ENCODE measurements at regions of chr12 and their contacts with region 1.

Region 1: DNA sequence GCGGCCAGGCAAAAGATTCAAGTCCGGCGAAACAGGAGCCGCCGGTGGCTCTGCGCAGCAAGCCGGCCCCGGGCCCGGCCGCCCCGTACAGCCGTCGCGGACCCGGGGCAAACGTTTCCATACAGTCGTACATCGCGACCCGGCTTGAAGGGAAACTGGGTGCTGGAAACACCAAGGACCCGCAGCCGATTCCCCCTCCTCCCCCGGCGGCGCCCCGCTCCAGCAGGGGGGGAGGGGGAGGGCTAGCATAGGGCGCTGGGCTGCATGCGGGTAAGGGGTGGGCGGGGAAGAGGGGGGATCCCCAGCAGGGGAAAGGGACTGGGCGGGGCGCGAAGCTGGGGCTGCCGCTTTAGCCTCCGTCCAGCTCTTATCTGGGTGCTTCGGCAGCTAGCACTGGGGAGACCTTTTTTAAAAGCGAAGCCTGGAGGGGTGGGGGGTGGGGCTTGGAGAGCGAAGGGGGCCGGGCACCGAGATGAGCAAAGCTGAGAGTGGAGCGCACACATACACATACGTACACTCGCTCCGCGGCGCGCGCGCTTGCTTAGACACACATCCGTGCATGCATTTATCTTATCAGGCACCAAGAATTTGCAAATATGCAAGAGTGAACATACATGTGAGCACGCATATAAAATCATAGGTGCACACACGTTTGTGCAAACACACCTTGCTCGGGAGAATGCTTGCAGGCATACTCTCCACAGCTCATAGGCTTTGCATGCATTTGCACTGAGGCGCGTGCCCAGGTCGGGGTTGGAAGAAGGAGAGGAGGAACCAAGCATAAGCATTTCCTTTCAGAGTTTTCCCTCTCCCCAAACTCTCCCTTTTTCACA is 11.8 kb downstream of the RARG start:
- DNase-seq: peak; percentile 77
- H3K4me3 ChIP-seq: peak overlapping the region; percentile 55 to 74 (median 62)
- H3K27ac ChIP-seq: peak overlapping the region; percentile 98 to 100 (median 99)
- H3K4me1 ChIP-seq: peaks cover 57 to 74% (median 66%) of the 10 kb centered on the region in 4 donors
- H3K27me3 ChIP-seq: no peaks in the 10 kb centered on the region
- CTCF ChIP-seq: no peak
- EP300 ChIP-seq: no peak
- POLR2A ChIP-seq: no peak

Region 2: GRCh38 chr12:53251477-53252348 is 31.5 kb after region 1 on chr12:
- in situ Hi-C with region 1: no loop called
- intact Hi-C with region 1: loop called (anchors 2 kb)
- DNase-seq: peak; percentile 80
- H3K4me3 ChIP-seq: peak overlapping the region; percentile 45 to 92 (median 79)
- H3K27ac ChIP-seq: peak overlapping the region; percentile 93 to 97 (median 94)
- H3K4me1 ChIP-seq: peaks cover 15 to 24% (median 24%) of the 10 kb centered on the region in 4 donors
- H3K27me3 ChIP-seq: no peaks in the 10 kb centered on the region
- CTCF ChIP-seq: peak in 4 of 5 experiments; percentile 7 to 43 (median 27)
- EP300 ChIP-seq: no peak
- POLR2A ChIP-seq: peak; percentile 63

Region 3: DNA sequence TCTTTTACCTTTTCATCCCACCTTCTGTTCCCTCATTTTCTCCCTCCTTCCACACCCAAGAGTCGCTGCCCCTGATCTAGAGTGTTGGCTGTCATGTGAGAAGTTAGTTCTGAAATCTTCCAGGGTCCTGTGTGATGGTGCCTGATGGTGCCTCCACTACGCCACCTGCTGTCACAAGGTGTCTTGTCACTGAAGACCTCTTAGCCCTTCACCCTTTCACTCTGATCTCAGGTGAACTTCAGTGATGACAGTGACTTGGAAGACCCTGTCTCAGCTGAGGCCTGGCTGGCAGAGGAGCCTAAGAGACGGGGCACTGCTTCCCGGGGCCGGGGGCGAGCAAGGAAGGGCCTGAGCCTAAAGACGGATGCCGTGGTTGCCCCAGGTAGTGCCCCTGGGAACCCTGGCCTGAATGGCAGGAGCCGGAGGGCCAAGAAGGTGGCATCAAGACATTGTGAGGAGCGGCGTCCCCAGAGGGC is 67.6 kb after region 1 on chr12:
- in situ Hi-C with region 1: loop called in 2 of 4 experiments (anchors 10 kb)
- intact Hi-C with region 1: loop called (anchors 5 kb)
- DNase-seq: peak; percentile 79
- H3K4me3 ChIP-seq: no peak overlapping the region
- H3K27ac ChIP-seq: no peak overlapping the region
- H3K4me1 ChIP-seq: no peaks in the 10 kb centered on the region
- H3K27me3 ChIP-seq: no peaks in the 10 kb centered on the region
- CTCF ChIP-seq: peak; percentile 56 to 85 (median 63)
- EP300 ChIP-seq: no peak
- POLR2A ChIP-seq: no peak

Region 4: GRCh38 chr12:53551889-53552291 is 331.7 kb after region 1 on chr12:
- in situ Hi-C with region 1: no loop called
- intact Hi-C with region 1: no loop called
- DNase-seq: no peak
- H3K4me3 ChIP-seq: no peak overlapping the region
- H3K27ac ChIP-seq: peak overlapping the region in 2 of 4 donors; percentile 33 to 59
- H3K4me1 ChIP-seq: peaks cover 0 to 15% (median 7%) of the 10 kb centered on the region in 4 donors
- H3K27me3 ChIP-seq: no peaks in the 10 kb centered on the region
- CTCF ChIP-seq: no peak
- EP300 ChIP-seq: no peak
- POLR2A ChIP-seq: no peak

Region 5: DNA sequence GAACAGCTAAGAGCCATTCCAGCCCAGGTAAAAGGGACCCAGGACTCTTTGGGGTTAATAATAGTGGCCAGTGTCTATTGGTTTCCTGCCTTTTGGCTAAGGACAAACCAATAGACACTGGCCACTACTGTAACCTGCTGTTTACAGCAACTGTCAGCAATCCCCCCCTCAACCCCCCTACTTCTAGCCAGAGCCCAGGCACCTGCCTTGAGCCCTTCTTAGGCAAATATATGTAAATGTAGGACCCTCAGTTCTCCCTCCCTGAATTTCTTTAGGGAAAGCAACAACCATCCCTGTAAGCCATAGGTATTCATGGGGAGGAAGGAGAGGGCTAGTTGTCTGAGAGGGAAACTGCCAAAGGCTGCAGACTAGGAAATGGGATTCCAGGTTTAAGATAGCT is 855.8 kb after region 1 on chr12:
- in situ Hi-C with region 1: no loop called
- intact Hi-C with region 1: no loop called
- DNase-seq: no peak
- H3K4me3 ChIP-seq: no peak overlapping the region
- H3K27ac ChIP-seq: no peak overlapping the region
- H3K4me1 ChIP-seq: no peaks in the 10 kb centered on the region
- H3K27me3 ChIP-seq: peaks cover 77% of the 10 kb centered on the region
- CTCF ChIP-seq: no peak
- EP300 ChIP-seq: no peak
- POLR2A ChIP-seq: no peak

Measured in transverse colon (tissue), 4 donors.